Endothelial cell of umbilical vein (primary cell): ENCODE measurements at regions of chr2 and their contacts with region 1.

Region 1: GRCh38 chr2:11073251-11073650 is 82.0 kb upstream of the SLC66A3 start:
- DNase-seq: peak; percentile 30
- H3K4me3 ChIP-seq: no peak overlapping the region
- H3K27ac ChIP-seq: no peak overlapping the region
- H3K4me1 ChIP-seq: peaks cover 17% of the 10 kb centered on the region
- H3K27me3 ChIP-seq: no peaks in the 10 kb centered on the region
- CTCF ChIP-seq: peak; percentile 50 to 61
- POLR2A ChIP-seq: no peak

Region 2: DNA sequence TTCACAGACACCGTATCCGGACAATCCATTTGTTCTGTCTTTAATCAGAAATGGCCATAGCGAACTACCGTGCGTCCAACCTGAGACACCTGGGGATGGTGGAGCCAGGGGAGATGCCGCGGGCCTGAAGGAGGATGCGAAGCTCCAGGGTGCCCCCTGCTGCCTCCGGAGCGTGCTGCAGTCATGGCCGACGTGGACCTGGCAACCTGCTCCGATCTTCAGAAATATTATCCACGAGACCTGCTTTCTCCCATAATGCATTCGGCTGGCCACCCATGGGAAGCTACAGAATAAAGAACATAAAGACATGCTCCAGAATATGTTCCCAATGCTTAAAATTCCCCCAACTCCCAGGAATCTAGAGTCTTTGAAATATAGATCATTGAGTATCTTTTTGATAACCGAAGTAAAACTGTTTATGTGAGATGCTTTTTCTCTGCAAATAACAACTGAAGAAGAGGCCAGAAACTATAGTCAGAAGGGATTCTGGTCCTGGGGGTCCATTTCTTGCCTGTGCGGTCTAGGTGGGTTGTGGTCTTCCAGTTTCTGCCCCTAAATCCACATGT is 51.3 kb after region 1 on chr2:
- CTCF ChIA-PET with region 1: interaction called, 3 read pairs
- POLR2A ChIA-PET with region 1: no interaction called
- dilution Hi-C with region 1: no loop called
- intact Hi-C with region 1: loop called (anchors 1 kb)
- DNase-seq: peak; percentile 52
- H3K4me3 ChIP-seq: no peak overlapping the region
- H3K27ac ChIP-seq: no peak overlapping the region
- H3K4me1 ChIP-seq: peaks cover 15% of the 10 kb centered on the region
- H3K27me3 ChIP-seq: peaks cover 0 to 1% of the 10 kb centered on the region in 2 experiments
- CTCF ChIP-seq: peak; percentile 85 to 94
- POLR2A ChIP-seq: no peak